Calu3 (cell line): ENCODE measurements at regions of chr6 and their contacts with region 1.

Region 1: DNA sequence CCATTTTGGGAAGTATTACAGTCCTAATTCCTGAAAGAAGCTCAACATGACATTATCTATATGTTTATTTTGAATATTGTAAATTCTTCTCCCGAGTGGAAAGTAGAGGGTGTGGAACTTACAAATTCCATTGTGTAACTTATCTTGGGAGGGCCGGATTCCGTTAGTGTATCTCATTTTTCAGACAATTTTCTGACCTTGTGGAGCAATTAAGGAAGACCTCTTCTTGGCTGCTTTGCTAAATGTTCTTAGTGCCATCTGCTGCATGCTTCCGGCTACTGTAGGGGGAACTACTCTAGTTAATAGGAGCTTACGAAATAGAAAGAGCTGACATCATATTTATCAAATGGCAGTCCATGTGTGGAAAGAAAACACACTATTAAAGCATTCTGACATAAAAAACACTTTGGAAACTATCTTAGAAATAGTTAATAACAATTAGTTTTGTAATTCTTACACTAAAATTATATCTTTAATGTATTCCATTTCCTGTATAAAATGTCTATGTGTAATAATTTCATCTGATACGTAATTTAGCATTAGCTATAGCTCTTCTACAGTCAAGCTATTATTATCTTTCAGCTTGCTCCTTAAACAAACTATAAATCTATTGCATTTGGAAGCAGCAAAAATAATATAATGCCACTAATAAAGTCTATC is 41.5 kb upstream of the KCNQ5 start:
- DNase-seq: peak; percentile 44
- H3K4me3 Mint-ChIP-seq: no peak overlapping the region
- H3K27ac Mint-ChIP-seq: no peak overlapping the region
- H3K4me1 Mint-ChIP-seq: no peaks in the 10 kb centered on the region
- H3K27me3 Mint-ChIP-seq: no peaks in the 10 kb centered on the region
- CTCF ChIP-seq: peak; percentile 43

Region 2: GRCh38 chr6:72425003-72425681 is 155.3 kb before region 1 on chr6:
- CTCF ChIA-PET with region 1: no interaction called
- intact Hi-C with region 1: no loop called
- DNase-seq: no peak
- H3K4me3 Mint-ChIP-seq: no peak overlapping the region
- H3K27ac Mint-ChIP-seq: no peak overlapping the region
- H3K4me1 Mint-ChIP-seq: no peaks in the 10 kb centered on the region
- H3K27me3 Mint-ChIP-seq: no peaks in the 10 kb centered on the region
- CTCF ChIP-seq: no peak

Region 3: GRCh38 chr6:72522719-72523141 is 57.7 kb before region 1 on chr6:
- CTCF ChIA-PET with region 1: no interaction called
- intact Hi-C with region 1: loop called (anchors 5 kb)
- DNase-seq: peak; percentile 41
- H3K4me3 Mint-ChIP-seq: no peak overlapping the region
- H3K27ac Mint-ChIP-seq: no peak overlapping the region
- H3K4me1 Mint-ChIP-seq: no peaks in the 10 kb centered on the region
- H3K27me3 Mint-ChIP-seq: no peaks in the 10 kb centered on the region
- CTCF ChIP-seq: no peak